CD14-positive monocyte (primary cell): ENCODE measurements at regions of chr15 and their contacts with region 1.

Region 1: GRCh38 chr15:41022487-41023090 is 69.3 kb downstream of the CHAC1 start:
- DNase-seq: peak; percentile 23 to 45 (median 28)
- H3K4me3 ChIP-seq: no peak overlapping the region
- H3K4me3 Mint-ChIP-seq: no peak overlapping the region
- H3K27ac ChIP-seq: no peak overlapping the region
- H3K27ac Mint-ChIP-seq: peak overlapping the region in 2 of 7 donors; percentile 13 to 52
- H3K4me1 ChIP-seq: peaks cover 5 to 13% of the 10 kb centered on the region in 2 donors
- H3K4me1 Mint-ChIP-seq: peaks cover 12% of the 10 kb centered on the region
- H3K27me3 ChIP-seq: no peaks in the 10 kb centered on the region
- H3K27me3 Mint-ChIP-seq: peaks cover 0 to 1% (median 0%) of the 10 kb centered on the region in 3 donors
- CTCF ChIP-seq: peak; percentile 74

Region 2: GRCh38 chr15:40857601-40858341 is 164.8 kb before region 1 on chr15:
- intact Hi-C with region 1: loop called in 1 of 2 experiments (anchors 2 kb)
- DNase-seq: peak; percentile 60 to 68 (median 62)
- H3K4me3 ChIP-seq: peak overlapping the region in 1 of 3 experiments; percentile 19
- H3K4me3 Mint-ChIP-seq: no peak overlapping the region
- H3K27ac ChIP-seq: peak overlapping the region in 1 of 2 donors; percentile 72
- H3K27ac Mint-ChIP-seq: peak overlapping the region in 5 of 7 donors; percentile 11 to 73 (median 66)
- H3K4me1 ChIP-seq: peaks cover 35 to 49% of the 10 kb centered on the region in 2 donors
- H3K4me1 Mint-ChIP-seq: peaks cover 40% of the 10 kb centered on the region
- H3K27me3 ChIP-seq: no peaks in the 10 kb centered on the region
- H3K27me3 Mint-ChIP-seq: peaks cover 4 to 8% (median 4%) of the 10 kb centered on the region in 3 donors
- CTCF ChIP-seq: peak; percentile 88

Region 3: DNA sequence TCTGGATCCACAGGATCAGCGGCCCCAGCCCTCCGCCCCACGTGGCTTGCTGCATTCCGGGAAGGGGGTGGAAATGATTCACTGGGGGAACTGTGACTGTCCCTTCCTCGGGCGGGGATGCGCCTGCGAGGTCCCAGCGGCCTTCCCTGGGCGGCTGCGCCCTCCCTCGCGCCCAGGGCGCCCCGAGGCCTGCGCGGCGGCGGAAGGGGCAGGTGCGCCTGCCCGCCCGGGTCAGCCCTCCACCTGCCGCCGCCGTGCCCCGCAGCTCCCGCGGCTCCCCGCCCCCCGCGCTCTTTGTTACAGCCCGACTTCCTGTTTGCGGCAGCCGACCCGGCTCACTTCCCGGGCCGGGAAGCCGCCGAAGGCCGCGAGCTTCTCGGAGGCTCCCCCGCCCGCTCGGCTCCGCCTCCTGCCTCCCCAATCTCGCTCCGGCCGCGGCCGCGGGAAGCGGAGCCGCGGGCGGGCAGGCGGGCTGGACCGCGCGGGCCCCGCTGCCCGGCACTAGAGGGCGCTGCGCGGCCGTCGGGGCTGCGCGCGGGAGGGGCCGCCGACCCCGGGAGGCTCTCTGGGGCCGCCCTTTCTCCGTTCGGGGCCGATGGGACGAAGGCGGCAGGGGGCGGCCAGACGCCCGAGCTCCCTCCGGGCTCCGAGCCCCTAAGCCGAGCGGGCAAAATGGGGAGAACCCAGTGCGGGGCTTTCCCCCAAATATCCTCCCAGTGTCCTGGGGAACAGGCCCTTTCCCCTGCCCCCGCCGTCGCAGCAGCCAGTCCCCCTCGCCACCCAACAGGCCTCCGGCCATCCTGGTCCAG is 80.9 kb before region 1 on chr15:
- intact Hi-C with region 1: loop called in 1 of 2 experiments (anchors 10 kb)
- DNase-seq: peak; percentile 73 to 81 (median 76)
- H3K4me3 ChIP-seq: peak overlapping the region; percentile 57 to 80 (median 76)
- H3K4me3 Mint-ChIP-seq: peak overlapping the region; percentile 77 to 88
- H3K27ac ChIP-seq: peak overlapping the region; percentile 64 to 75
- H3K27ac Mint-ChIP-seq: peak overlapping the region in 6 of 7 donors; percentile 37 to 86 (median 54)
- H3K4me1 ChIP-seq: peaks cover 34 to 40% of the 10 kb centered on the region in 2 donors
- H3K4me1 Mint-ChIP-seq: peaks cover 35% of the 10 kb centered on the region
- H3K27me3 ChIP-seq: no peaks in the 10 kb centered on the region
- H3K27me3 Mint-ChIP-seq: peaks cover 9 to 16% (median 12%) of the 10 kb centered on the region in 3 donors
- CTCF ChIP-seq: peak; percentile 76